ENCODE measurements at regions of chr5 and their contacts with region 1.

Region 1: GRCh38 chr5:69334793-69335268 is 2.2 kb upstream of the CCDC125 start:
- DNase-seq: peak; percentile 53 to 81
- H3K4me3 ChIP-seq: no peak overlapping the region
- H3K27ac ChIP-seq: no peak overlapping the region
- H3K4me1 ChIP-seq: peaks cover 32% of the 10 kb centered on the region
- H3K27me3 ChIP-seq: no peaks in the 10 kb centered on the region
- CTCF ChIP-seq: peak; percentile 67

Region 2: DNA sequence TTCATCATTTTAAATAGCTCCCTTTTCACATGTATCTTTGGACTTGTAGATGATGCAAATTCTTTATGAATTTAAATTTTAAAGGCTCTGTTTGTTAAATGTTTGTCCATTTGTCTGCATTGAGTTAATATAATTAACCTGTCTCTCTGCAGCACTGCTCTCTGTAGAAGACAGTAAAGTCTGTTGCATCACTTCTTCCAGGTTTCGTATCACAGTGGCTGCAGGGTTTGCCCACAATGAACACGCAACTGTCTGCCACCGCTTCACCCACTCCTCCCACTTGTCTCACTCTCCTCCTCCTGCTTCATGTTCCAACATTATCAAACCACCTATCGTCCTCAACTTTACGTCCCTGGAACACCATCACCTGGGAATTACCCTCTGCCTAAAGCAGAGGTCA is 472.3 kb before region 1 on chr5:
- CTCF ChIA-PET with region 1: no interaction called
- POLR2A ChIA-PET with region 1: no interaction called
- intact Hi-C with region 1: no loop called
- DNase-seq: no peak
- H3K4me3 ChIP-seq: no peak overlapping the region
- H3K27ac ChIP-seq: no peak overlapping the region
- H3K4me1 ChIP-seq: no peaks in the 10 kb centered on the region
- H3K27me3 ChIP-seq: no peaks in the 10 kb centered on the region
- CTCF ChIP-seq: no peak

Region 3: DNA sequence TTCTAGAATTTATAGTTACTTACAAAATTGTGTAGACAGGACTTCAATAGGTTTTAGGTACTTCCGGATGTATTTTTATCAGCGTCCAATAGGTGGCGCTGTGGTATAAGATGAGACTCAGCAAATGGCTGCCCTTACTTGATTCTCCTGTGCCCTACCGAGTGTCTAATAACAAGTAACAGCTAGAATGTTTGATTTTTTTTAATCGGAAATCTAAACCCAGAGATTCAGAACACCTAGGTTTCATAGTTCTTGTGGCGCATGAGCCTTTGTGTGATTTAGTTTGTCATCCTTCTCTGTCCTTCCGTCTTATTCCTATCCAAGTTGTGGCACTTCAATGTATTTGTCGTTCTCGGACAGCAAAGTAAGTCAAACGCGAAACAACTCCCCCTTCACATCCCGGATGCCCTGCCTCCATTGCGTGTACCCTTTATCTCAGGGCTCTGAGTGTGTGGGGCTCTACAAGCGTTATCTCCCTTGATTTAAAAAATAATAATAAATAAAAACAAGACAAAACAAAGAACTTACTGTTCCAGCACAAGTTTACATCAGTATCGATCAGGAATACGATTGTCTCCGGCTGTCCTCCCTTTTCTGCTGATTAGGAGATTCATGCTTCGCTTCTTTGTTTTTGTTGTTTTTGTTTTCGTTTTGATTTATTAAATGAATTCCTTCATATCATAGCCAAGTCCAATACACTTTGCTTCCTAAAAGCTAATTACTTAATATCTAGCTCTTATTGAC is 291.7 kb before region 1 on chr5:
- CTCF ChIA-PET with region 1: no interaction called
- POLR2A ChIA-PET with region 1: no interaction called
- intact Hi-C with region 1: loop called (anchors 10 kb)
- DNase-seq: peak; percentile 71 to 77
- H3K4me3 ChIP-seq: peak overlapping the region; percentile 64
- H3K27ac ChIP-seq: peak overlapping the region; percentile 42
- H3K4me1 ChIP-seq: peaks cover 17% of the 10 kb centered on the region
- H3K27me3 ChIP-seq: no peaks in the 10 kb centered on the region
- CTCF ChIP-seq: peak; percentile 92

Region 4: DNA sequence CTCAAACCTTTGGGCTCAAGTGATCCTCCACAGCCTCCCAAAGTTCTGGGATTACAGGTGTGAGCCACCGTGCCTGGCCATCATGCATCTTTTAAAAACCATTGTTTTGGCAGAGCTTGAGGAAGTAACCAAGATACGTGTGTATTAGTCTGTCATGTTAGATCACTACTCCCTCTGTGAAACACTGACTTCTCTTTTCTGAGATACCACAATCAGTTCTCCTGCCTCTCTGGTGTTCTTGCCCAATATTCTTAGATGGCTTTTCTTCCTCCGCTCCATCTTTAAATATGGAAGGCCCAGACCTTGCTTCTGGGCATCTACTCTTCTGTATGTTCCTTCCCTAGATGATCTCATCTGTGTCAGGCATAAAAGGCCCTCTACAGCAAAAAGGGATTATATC is 182.1 kb before region 1 on chr5:
- CTCF ChIA-PET with region 1: interaction called, 13 read pairs
- POLR2A ChIA-PET with region 1: no interaction called
- intact Hi-C with region 1: no loop called
- DNase-seq: no peak
- H3K4me3 ChIP-seq: no peak overlapping the region
- H3K27ac ChIP-seq: no peak overlapping the region
- H3K4me1 ChIP-seq: no peaks in the 10 kb centered on the region
- H3K27me3 ChIP-seq: no peaks in the 10 kb centered on the region
- CTCF ChIP-seq: no peak

Region 5: DNA sequence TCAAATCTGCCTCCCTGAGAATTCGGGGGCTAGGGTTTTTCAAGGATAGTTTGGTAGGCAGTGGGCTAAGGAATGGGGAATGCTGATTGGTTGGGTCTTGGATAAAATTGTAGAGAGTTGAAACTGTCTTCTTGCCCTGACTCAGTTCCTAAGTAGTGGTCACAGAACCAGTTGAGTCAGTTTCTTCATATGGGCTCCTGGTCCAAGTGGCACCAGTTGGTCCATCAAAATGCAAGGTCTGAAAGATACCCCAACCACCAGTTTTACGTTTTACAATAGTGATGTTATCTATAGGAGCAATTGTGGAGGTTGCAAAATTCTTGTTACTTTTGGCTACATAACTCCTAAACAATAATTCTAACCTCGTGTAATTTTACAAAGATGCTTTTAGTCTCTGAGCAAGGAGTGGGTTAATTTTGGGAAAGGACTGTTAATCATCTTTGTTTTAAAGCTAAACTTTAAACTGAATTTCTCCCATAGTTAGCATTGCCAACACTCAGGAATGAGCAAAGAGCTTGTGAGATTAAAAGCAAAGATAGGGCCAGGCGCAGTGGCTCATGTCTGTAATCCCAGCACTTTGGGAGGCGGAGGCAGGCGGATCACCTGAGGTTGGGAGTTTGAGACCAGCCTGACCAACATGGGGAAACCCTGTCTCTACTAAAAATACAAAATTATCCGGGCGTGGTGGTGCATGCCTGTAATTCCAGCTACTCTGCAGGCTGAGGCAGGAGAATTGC is 92.4 kb before region 1 on chr5:
- CTCF ChIA-PET with region 1: no interaction called
- POLR2A ChIA-PET with region 1: no interaction called
- intact Hi-C with region 1: loop called (anchors 10 kb)
- DNase-seq: no peak
- H3K4me3 ChIP-seq: no peak overlapping the region
- H3K27ac ChIP-seq: no peak overlapping the region
- H3K4me1 ChIP-seq: peaks cover 21% of the 10 kb centered on the region
- H3K27me3 ChIP-seq: no peaks in the 10 kb centered on the region
- CTCF ChIP-seq: no peak

Region 6: DNA sequence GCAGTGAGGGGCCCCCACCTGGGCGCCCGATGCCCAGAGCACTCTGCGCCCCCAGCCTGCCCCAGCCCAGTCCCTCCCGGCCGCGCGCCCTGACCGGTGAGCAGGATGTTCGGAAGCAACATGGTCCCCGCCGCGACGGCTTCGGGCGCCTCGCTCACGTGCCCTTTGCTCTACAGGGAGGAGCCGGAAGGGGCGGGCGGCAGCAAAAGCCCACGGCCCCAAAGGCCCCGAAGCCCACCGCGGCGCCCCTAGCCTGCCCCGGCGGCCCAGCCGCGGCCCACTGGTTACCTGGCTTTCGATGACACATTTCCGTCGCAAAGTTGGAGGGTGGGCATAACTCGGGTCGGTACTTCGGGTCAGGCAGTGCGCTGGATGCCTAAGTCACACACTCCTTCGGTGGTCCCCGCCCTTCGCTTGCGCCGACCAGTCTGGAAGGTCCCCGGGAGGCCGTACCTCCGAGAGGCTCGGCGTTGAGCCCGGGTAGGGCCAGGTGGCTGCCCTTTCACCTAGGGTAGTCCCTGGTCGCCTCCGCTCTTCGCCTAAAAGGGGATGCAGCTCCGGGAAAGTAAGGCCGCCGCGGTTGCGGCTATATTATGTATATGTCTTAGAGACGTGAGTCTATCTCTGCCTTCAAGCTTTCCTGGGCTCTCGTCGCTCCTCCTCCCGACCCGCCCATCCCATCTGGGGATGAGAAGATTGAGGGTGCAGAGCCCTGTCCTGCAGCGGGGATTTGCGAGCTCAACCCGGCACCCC is 34.7 kb after region 1 on chr5 and contains the starts of genes AK6, RAD17 and TAF9:
- CTCF ChIA-PET with region 1: no interaction called
- POLR2A ChIA-PET with region 1: interaction called, 3 read pairs
- intact Hi-C with region 1: loop called (anchors 5 kb)
- DNase-seq: peak; percentile 80 to 90
- H3K4me3 ChIP-seq: peak within 1 kb of the TSS; percentile 94
- H3K27ac ChIP-seq: peak within 1 kb of the TSS; percentile 98
- H3K4me1 ChIP-seq: peaks cover 19% of the 10 kb centered on the region
- H3K27me3 ChIP-seq: no peaks in the 10 kb centered on the region
- CTCF ChIP-seq: no peak
- total RNA-seq, gene AK6: 21.6 and 23.0 TPM in 2 replicates
- total RNA-seq, gene RAD17: 21.1 and 22.4 TPM in 2 replicates
- total RNA-seq, gene TAF9: 44.4 and 50.8 TPM in 2 replicates

Region 7: DNA sequence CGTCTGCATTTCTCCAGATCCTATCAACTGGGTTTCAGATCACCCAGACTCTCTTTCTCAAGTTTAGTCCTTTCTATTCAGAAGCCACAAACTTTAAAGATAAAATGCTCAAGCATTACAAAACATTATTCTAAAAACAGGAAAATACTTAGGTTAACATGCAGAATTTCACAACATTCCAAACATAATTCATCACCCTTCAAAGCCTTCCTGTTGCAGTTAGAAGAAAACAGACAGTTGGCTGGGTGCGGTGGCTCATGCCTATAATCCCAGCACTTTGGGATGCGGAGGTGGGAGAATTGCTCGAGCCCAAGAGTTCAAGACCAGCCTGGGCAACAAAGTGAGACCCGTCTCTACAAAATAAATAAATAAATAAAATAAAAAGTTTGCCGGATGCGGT is 150.1 kb after region 1 on chr5:
- CTCF ChIA-PET with region 1: no interaction called
- POLR2A ChIA-PET with region 1: no interaction called
- intact Hi-C with region 1: no loop called
- DNase-seq: no peak
- H3K4me3 ChIP-seq: no peak overlapping the region
- H3K27ac ChIP-seq: no peak overlapping the region
- H3K4me1 ChIP-seq: 0 out of 2 replicates have a peak, but pooled peaks cover 5% of the 10 kb centered on the region
- H3K27me3 ChIP-seq: no peaks in the 10 kb centered on the region
- CTCF ChIP-seq: no peak